OCI-LY7 (cell line): ENCODE measurements at regions of chr7 and their contacts with region 1.

Region 1: DNA sequence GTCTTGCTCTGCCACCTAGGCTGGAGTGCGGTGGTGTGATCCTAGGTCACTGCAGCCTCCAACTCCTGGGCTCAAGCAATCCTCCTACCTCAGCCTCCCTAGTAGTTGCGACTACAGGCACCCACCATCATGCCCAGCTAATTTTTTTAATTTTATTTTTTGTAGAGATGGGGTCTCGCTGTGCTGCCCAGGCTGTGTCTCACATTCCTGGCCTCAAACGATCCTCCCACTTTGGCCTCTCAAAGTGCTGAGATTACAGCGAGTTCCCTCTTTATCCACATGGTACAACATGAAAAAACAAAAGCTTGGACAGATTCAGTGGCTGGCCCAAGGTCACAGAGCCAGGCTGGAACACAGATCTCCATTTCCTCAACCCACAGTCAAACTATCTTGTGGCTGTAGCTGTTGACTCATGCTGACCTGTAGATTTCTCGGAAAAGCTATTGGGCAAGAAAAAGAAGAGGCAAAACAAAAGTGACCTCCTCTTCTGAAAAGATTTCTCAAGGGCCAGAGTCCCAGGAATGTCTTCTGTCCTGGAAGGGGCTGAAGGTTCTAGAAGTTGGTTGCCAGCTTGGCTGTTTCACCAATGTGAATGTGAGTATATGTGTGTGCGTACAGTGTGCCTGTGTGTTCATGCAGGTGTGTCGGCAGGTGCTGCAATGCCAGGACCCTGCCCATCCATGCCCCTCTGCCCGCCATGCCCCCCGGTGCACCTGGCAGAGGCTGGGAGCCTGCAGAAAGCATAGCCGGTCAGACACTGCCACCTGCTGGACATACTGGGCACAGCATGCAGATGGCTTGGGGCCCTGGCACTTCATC is 28.4 kb downstream of the TMEM130 start:
- DNase-seq: peak; percentile 56
- H3K4me3 ChIP-seq: no peak overlapping the region
- H3K27ac ChIP-seq: no peak overlapping the region
- H3K4me1 ChIP-seq: no peaks in the 10 kb centered on the region
- CTCF ChIP-seq: peak; percentile 96

Region 2: DNA sequence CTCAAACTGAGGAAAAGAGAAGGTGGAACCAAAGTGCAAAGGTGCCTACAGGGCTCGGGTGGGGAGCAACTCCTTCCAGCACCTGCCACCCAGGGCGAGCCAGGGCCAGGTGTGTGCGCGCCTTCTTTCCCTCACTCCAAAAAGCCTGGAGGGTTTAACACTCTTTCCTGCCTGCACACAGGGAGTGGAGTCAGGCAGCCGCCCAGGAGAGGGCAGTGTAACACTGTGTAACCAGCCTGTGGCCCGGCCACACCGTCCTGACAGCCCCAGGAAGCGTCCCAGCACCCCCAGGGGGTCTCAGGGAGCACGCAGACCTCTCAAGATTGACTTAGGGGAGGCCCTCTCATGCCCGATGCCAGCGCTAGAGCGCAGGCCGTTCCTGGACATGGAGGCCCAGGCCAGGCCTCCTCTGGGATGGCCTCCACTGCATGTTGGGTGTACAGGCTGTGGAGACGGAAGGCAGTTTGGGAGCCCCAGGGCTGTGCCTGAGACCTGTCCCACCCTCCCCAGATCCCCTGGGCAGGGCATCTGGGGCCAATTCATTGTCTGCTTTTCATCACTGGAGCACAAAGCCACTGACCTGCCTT is 546.5 kb before region 1 on chr7:
- CTCF ChIA-PET with region 1: no interaction called
- POLR2A ChIA-PET with region 1: no interaction called
- intact Hi-C with region 1: loop called (anchors 5 kb)
- DNase-seq: peak; percentile 58
- H3K4me3 ChIP-seq: no peak overlapping the region
- H3K27ac ChIP-seq: no peak overlapping the region
- H3K4me1 ChIP-seq: peaks cover 4% of the 10 kb centered on the region
- CTCF ChIP-seq: peak; percentile 80

Region 3: GRCh38 chr7:98434095-98434494 is 407.3 kb before region 1 on chr7:
- CTCF ChIA-PET with region 1: no interaction called
- POLR2A ChIA-PET with region 1: no interaction called
- intact Hi-C with region 1: loop called (anchors 1 kb)
- DNase-seq: no peak
- H3K4me3 ChIP-seq: no peak overlapping the region
- H3K27ac ChIP-seq: no peak overlapping the region
- H3K4me1 ChIP-seq: peaks cover 9% of the 10 kb centered on the region
- CTCF ChIP-seq: no peak

Region 4: GRCh38 chr7:98745722-98746318 is 95.6 kb before region 1 on chr7:
- CTCF ChIA-PET with region 1: no interaction called
- POLR2A ChIA-PET with region 1: no interaction called
- intact Hi-C with region 1: loop called (anchors 5 kb)
- DNase-seq: peak; percentile 81
- H3K4me3 ChIP-seq: no peak overlapping the region
- H3K27ac ChIP-seq: no peak overlapping the region
- H3K4me1 ChIP-seq: no peaks in the 10 kb centered on the region
- CTCF ChIP-seq: peak; percentile 95